ENCODE measurements at regions of chr2 and their contacts with region 1.

Region 1: DNA sequence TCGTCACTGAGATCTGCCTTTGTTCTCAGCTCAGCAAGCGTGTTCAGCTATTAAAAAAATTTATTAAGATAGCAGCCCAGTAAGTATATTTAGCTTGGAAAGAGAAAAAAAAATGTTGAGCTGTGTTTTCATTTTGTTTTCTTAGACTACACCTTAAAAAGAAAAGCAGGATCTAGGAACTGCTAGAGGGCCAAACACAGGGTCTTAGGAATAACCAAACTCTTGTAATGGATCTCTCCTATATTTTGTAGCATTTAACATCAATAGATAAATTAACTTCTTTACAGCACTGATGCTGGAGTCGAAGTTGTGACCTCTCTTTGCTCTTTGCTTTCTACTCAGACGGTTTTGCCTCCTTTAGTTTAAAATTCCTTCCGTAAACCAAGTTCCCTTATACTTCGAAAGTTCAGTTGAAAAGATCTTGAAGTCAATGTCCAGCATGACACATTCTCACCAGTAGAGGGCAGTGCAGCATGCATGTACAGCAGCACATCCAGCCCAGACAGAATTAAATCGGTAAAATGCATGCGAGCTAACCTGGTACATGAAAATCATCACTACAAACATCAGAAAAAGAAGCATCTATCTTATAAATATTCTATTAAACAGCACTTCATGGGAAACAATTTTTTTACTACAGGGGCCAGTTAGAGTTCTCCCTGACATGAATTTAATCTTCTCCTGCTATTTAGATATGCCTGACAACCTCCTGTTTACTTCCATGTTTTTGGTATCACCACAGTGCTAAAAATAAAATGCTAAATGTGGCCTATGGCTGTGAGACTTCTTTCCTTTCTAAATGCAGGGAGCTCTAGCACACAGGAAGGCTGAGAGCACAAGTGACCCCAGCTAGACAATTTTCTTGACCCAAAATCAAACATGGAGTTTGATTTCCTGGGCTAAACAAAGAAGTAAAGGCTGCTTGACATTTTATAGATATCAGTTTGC is 48.2 kb upstream of the MAP3K20 start:
- DNase-seq: peak; percentile 90
- H3K4me3 Mint-ChIP-seq: no peak overlapping the region
- H3K27ac Mint-ChIP-seq: no peak overlapping the region
- H3K4me1 Mint-ChIP-seq: no peaks in the 10 kb centered on the region
- H3K27me3 Mint-ChIP-seq: peaks cover 3% of the 10 kb centered on the region

Region 2: DNA sequence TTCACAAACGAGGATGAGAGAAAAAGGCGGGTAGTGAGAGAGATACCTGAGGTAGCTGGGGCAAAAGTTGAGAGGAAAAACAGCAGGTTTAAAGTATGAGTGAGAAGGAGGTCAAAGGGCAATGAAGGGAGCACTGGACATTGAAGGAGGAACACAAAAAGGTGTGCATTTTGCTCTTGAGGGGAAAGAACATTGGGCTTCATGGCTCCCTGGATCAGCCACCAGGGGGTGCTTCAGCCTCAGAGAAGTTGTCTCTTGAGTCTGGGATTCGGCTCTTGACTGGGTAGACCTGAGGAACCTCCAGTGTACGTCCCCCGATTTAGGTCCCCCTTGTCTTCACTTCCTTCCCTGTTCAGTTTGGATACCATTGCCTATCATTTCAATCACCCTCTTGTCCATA is 163.3 kb before region 1 on chr2:
- CTCF ChIA-PET with region 1: no interaction called
- intact Hi-C with region 1: loop called (anchors 5 kb)
- DNase-seq: peak; percentile 78
- H3K4me3 Mint-ChIP-seq: no peak overlapping the region
- H3K27ac Mint-ChIP-seq: no peak overlapping the region
- H3K4me1 Mint-ChIP-seq: no peaks in the 10 kb centered on the region
- H3K27me3 Mint-ChIP-seq: peaks cover 16% of the 10 kb centered on the region

Region 3: DNA sequence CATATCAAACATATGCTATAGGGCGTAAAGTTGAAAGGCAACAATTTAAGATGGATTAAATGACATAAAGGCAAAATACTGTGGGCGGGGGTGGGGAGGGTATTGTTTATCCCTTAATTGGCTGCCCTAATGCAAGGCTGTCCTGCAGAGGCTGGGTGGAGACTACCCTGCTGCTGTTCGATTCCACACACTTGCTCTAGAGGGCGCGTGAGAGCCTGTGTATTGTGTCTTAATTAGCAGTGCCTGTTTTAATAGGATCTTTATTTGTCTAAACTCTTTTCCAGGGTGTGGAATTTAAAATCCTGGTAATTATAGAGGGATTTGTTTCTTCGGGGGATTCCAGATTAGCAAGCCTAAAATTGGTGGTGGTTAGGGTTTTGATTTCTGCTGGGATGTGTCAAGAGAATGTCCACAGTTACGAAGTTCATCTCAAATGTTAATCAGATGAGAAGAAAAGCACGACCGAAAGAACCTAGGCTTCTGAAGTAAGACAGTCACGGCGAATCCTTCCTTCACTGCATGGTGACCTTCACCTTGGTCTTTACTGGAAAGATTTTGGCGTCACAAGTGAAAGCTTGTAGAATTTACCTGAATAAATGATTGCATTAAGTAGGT is 55.3 kb before region 1 on chr2:
- CTCF ChIA-PET with region 1: no interaction called
- intact Hi-C with region 1: loop called (anchors 2 kb)
- DNase-seq: peak; percentile 70
- H3K4me3 Mint-ChIP-seq: no peak overlapping the region
- H3K27ac Mint-ChIP-seq: no peak overlapping the region
- H3K4me1 Mint-ChIP-seq: peaks cover 23% of the 10 kb centered on the region
- H3K27me3 Mint-ChIP-seq: peaks cover 14% of the 10 kb centered on the region

Region 4: GRCh38 chr2:173075781-173076580 is 48.5 kb after region 1 on chr2 and contains the start of gene MAP3K20:
- CTCF ChIA-PET with region 1: interaction called, 3 read pairs
- intact Hi-C with region 1: loop called (anchors 5 kb)
- DNase-seq: peak; percentile 65
- H3K4me3 Mint-ChIP-seq: peak within 1 kb of the TSS; percentile 68
- H3K27ac Mint-ChIP-seq: no peak within 1 kb of the TSS
- H3K4me1 Mint-ChIP-seq: peaks cover 5% of the 10 kb centered on the region
- H3K27me3 Mint-ChIP-seq: peaks cover 41% of the 10 kb centered on the region
- total RNA-seq, gene MAP3K20: 3.0 to 3.7 TPM

Region 5: GRCh38 chr2:173448938-173449471 is 421.6 kb after region 1 on chr2:
- CTCF ChIA-PET with region 1: no interaction called
- intact Hi-C with region 1: loop called (anchors 1 kb)
- DNase-seq: peak; percentile 82
- H3K4me3 Mint-ChIP-seq: peak overlapping the region; percentile 64
- H3K27ac Mint-ChIP-seq: peak overlapping the region; percentile 39
- H3K4me1 Mint-ChIP-seq: peaks cover 11% of the 10 kb centered on the region
- H3K27me3 Mint-ChIP-seq: peaks cover 4% of the 10 kb centered on the region

Measured in activated naive CD4-positive, alpha-beta T cell treated with anti-CD3 and anti-CD28 coated beads for 36 hours (primary cell).